ENCODE measurements at regions of chr10 and their contacts with region 1.

Region 1: DNA sequence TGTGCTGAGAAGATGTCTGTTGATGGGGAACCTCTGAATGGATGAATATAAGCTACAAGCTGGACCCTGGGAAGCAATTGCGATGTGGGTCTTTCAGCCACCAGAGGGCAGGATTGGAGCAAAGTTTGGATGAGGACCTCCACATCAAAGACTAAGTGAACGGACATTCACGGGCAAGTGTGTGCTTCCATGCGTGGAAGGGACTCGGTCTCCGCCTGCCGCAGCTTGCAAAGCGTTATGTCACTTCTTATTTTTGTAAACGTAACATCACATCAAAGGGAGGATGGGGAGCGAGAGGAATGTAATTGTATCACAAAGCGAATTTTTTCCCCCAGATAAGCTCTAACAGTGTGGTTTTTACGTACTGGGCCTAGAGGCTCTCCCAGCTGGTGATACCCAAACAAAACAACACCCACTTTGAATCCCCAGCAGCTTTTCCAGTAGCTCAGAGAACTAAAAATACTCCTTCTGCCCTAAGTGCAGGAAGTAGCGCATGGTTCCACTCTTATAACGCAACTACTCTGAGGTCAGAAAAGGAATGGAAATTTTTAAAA is 65.0 kb downstream of the VWA2 start:
- DNase-seq: peak; percentile 67
- ATAC-seq: peak; percentile 92
- H3K4me3 ChIP-seq: peak overlapping the region; percentile 78
- H3K27ac ChIP-seq: no peak overlapping the region
- H3K4me1 ChIP-seq: peaks cover 8% of the 10 kb centered on the region
- H3K27me3 ChIP-seq: no peaks in the 10 kb centered on the region
- CTCF ChIP-seq: peak; percentile 77 to 91 (median 87); a peak in 5 of 6 replicates
- EP300 ChIP-seq: no peak
- POLR2A ChIP-seq: no peak
- RAD21 ChIP-seq: peak; percentile 90

Region 2: DNA sequence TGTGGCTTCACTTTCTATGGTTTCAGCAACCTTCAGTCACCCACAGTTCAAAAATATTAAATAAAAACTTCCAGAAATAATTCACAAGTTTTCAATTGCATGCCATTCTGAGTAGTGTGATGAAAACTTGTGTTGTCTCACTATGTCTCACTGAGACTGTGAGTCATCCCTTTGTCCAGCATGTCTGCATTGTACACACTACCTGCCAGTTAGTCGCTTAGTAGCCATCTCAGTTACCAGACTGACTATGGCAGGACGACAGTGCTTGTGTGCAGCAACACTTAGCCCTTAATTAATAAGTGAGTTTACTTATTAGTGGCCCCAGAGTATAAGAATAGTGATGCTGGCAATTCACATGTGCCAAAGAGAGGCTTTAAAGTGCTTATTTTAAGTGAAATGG is 152.6 kb before region 1 on chr10:
- CTCF ChIA-PET with region 1: no interaction called
- POLR2A ChIA-PET with region 1: no interaction called
- RAD21 ChIA-PET with region 1: no interaction called
- SMC1A ChIA-PET with region 1: no interaction called
- in situ Hi-C with region 1: no loop called
- intact Hi-C with region 1: no loop called
- DNase-seq: no peak
- ATAC-seq: 0 out of 3 replicates have a peak, but pooled peaks have one; percentile 27
- H3K4me3 ChIP-seq: no peak overlapping the region
- H3K27ac ChIP-seq: no peak overlapping the region
- H3K4me1 ChIP-seq: no peaks in the 10 kb centered on the region
- H3K27me3 ChIP-seq: no peaks in the 10 kb centered on the region
- CTCF ChIP-seq: no peak
- EP300 ChIP-seq: no peak
- POLR2A ChIP-seq: no peak
- RAD21 ChIP-seq: no peak

Region 3: DNA sequence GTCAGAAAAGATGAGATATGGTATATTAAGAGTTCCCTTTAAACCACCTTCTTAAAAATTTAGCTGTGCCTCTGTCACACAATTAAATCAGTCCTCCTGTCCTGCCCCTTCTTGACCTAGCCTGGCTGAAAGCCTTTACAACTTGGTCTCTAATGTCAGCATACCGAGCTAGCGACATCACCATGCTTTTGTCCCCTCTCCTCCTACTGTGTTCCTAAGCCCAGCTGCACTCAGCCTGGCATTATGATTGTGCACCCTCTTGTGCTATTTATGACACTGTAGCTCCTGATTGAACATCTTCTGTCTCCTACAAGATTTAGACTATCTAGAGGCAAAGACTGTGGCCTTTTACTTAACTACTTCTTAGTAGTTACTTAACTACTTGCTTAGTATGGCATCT is 95.7 kb before region 1 on chr10:
- CTCF ChIA-PET with region 1: no interaction called
- POLR2A ChIA-PET with region 1: no interaction called
- RAD21 ChIA-PET with region 1: no interaction called
- SMC1A ChIA-PET with region 1: no interaction called
- in situ Hi-C with region 1: loop called (anchors 25 kb)
- intact Hi-C with region 1: no loop called
- DNase-seq: no peak
- ATAC-seq: no peak
- H3K4me3 ChIP-seq: no peak overlapping the region
- H3K27ac ChIP-seq: no peak overlapping the region
- H3K4me1 ChIP-seq: no peaks in the 10 kb centered on the region; the same call in 1 of the 2 replicates
- H3K27me3 ChIP-seq: peaks cover 0 to 5% of the 10 kb centered on the region in 2 experiments; a peak in 3 of 4 replicates
- CTCF ChIP-seq: no peak
- EP300 ChIP-seq: no peak
- POLR2A ChIP-seq: no peak
- RAD21 ChIP-seq: no peak

Region 4: GRCh38 chr10:114334301-114334700 is 30.2 kb after region 1 on chr10:
- CTCF ChIA-PET with region 1: interaction called, 16 read pairs
- POLR2A ChIA-PET with region 1: no interaction called
- RAD21 ChIA-PET with region 1: interaction called, 3 read pairs
- SMC1A ChIA-PET with region 1: interaction called, 3 read pairs
- in situ Hi-C with region 1: no loop called
- intact Hi-C with region 1: no loop called
- DNase-seq: no peak
- ATAC-seq: no peak
- H3K4me3 ChIP-seq: no peak overlapping the region
- H3K27ac ChIP-seq: no peak overlapping the region
- H3K4me1 ChIP-seq: peaks cover 4% of the 10 kb centered on the region; the same call in 1 of the 2 replicates
- H3K27me3 ChIP-seq: peaks cover 0 to 2% of the 10 kb centered on the region in 2 experiments; a peak in 2 of 4 replicates
- CTCF ChIP-seq: no peak
- EP300 ChIP-seq: no peak
- POLR2A ChIP-seq: no peak
- RAD21 ChIP-seq: no peak

Region 5: DNA sequence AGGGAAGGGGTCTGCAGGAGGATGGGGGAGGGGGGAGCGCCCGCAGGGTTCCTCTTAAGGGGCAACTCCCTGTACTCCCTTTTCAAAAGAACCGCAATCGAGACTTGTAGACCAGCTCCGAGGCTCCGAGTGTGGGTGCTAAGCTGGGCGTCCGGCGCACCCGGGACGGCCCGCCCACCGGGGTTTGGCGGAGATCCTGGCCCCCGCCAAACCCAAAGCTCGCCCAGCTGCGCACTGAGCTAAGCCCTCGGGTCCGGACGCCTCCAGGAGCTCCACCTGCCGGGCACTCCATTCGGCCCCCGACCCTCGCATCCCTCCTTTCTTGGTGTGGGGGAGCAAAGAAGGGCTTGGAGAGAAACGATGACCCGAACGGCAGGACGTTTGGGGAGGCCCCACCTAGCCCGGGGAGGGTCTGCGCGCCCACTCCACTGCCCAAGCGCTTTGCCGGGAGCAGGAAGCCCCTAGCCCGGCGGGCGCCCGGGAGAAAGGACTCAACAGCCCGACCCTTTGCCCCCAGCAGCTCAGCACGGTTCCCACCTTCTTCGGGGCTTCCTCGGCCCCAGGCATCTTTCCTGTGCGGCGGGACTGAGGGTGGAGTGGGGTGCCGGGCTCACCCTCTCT is 99.6 kb after region 1 on chr10:
- CTCF ChIA-PET with region 1: interaction called, 25 read pairs
- POLR2A ChIA-PET with region 1: no interaction called
- RAD21 ChIA-PET with region 1: interaction called, 21 read pairs
- SMC1A ChIA-PET with region 1: interaction called, 14 read pairs
- in situ Hi-C with region 1: no loop called
- intact Hi-C with region 1: no loop called
- DNase-seq: no peak
- ATAC-seq: peak; percentile 50
- H3K4me3 ChIP-seq: peak overlapping the region; percentile 40; the same call in 1 of the 2 replicates
- H3K27ac ChIP-seq: peak overlapping the region; percentile 8; the same call in 1 of the 2 replicates
- H3K4me1 ChIP-seq: peaks cover 8% of the 10 kb centered on the region
- H3K27me3 ChIP-seq: peaks cover 5 to 7% of the 10 kb centered on the region in 2 experiments; a peak in 3 of 4 replicates
- CTCF ChIP-seq: no peak; a peak in 1 of 6 replicates
- EP300 ChIP-seq: no peak
- POLR2A ChIP-seq: no peak
- RAD21 ChIP-seq: peak; percentile 23; the same call in 1 of the 2 replicates

Region 6: DNA sequence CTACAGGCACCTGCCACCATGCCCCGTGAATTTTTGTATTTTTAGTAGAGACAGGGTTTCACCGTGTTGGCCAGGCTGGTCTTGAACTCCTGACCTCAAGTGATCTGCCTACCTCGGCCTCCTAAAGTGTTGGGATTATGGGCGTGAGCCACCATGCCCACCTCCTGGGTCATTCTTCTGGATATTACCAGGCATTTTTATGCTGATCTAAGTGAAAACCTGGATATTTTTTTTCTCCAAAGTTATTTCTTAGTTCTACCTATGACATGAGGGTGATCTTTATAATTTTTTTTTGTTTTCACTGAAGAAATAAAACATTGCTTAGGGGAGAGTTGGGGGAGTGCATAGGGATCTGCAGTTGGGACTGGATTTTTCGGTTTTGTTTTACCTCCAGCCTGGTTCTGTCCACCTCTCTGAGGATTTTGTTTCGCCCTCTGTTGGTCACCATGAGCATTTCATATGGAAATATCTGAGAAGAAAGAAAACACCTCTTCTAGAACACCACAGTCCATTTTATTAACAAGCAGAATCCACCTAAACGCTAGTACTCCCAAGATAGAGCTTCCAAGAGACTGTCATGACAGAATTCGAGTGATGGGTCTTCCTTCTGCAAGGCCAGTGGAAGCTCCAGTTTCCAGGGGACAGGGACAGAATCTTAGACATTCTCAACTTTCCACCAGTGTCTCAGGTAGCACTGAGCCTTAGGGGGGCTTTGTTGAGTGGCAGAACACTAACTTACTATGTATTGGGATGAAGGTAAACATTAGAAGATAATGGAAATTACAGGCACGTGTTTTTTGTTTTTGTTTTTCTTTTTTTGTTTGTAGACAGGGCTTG is 133.6 kb after region 1 on chr10:
- CTCF ChIA-PET with region 1: interaction called, 58 read pairs
- POLR2A ChIA-PET with region 1: no interaction called
- RAD21 ChIA-PET with region 1: interaction called, 18 read pairs
- SMC1A ChIA-PET with region 1: interaction called, 10 read pairs
- in situ Hi-C with region 1: no loop called
- intact Hi-C with region 1: loop called (anchors 1 kb)
- DNase-seq: no peak
- ATAC-seq: peak; percentile 56
- H3K4me3 ChIP-seq: no peak overlapping the region
- H3K27ac ChIP-seq: no peak overlapping the region
- H3K4me1 ChIP-seq: no peaks in the 10 kb centered on the region
- H3K27me3 ChIP-seq: no peaks in the 10 kb centered on the region; a peak in 1 of 4 replicates
- CTCF ChIP-seq: peak; percentile 41 to 51 (median 44)
- EP300 ChIP-seq: no peak
- POLR2A ChIP-seq: no peak
- RAD21 ChIP-seq: peak; percentile 49; the same call in 1 of the 2 replicates

Region 7: GRCh38 chr10:114470956-114471905 is 167.1 kb after region 1 on chr10:
- CTCF ChIA-PET with region 1: interaction called, 25 read pairs
- POLR2A ChIA-PET with region 1: no interaction called
- RAD21 ChIA-PET with region 1: interaction called, 13 read pairs
- SMC1A ChIA-PET with region 1: interaction called, 18 read pairs
- in situ Hi-C with region 1: no loop called
- intact Hi-C with region 1: no loop called
- DNase-seq: peak; percentile 24
- ATAC-seq: peak; percentile 99
- H3K4me3 ChIP-seq: no peak overlapping the region
- H3K27ac ChIP-seq: no peak overlapping the region
- H3K4me1 ChIP-seq: 0 out of 2 replicates have a peak, but pooled peaks cover 3% of the 10 kb centered on the region
- H3K27me3 ChIP-seq: no peaks in the 10 kb centered on the region
- CTCF ChIP-seq: peak; percentile 83 to 86 (median 85)
- EP300 ChIP-seq: no peak
- POLR2A ChIP-seq: no peak
- RAD21 ChIP-seq: peak; percentile 89

Region 8: GRCh38 chr10:114779803-114780609 is 475.9 kb after region 1 on chr10:
- CTCF ChIA-PET with region 1: interaction called, 17 read pairs
- POLR2A ChIA-PET with region 1: no interaction called
- RAD21 ChIA-PET with region 1: no interaction called
- SMC1A ChIA-PET with region 1: interaction called, 12 read pairs
- in situ Hi-C with region 1: loop called (anchors 25 kb)
- intact Hi-C with region 1: no loop called
- DNase-seq: no peak
- ATAC-seq: peak; percentile 53
- H3K4me3 ChIP-seq: no peak overlapping the region
- H3K27ac ChIP-seq: no peak overlapping the region
- H3K4me1 ChIP-seq: no peaks in the 10 kb centered on the region
- H3K27me3 ChIP-seq: peaks cover 0 to 2% of the 10 kb centered on the region in 2 experiments; a peak in 1 of 4 replicates
- CTCF ChIP-seq: no peak
- EP300 ChIP-seq: no peak
- POLR2A ChIP-seq: no peak
- RAD21 ChIP-seq: no peak

Region 9: DNA sequence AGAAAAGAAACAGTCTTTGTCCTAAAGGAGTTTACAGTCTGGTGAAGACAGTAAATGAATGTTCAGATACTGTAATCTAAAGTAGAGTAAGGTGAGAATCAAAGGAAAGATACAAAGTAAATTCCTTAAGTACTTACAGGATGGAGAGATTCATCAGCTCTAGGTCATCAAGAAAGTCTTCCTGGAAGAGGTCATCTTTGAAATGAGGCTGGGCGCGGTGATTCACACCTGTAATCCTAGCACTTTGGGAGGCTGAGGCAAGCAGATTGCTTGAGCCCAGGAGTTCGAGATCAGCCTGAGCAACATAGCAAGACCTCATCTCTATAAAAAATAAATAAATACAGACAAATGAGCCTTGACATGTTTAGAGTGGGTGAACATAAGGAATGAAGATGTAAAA is 535.8 kb after region 1 on chr10:
- CTCF ChIA-PET with region 1: no interaction called
- POLR2A ChIA-PET with region 1: no interaction called
- RAD21 ChIA-PET with region 1: no interaction called
- SMC1A ChIA-PET with region 1: no interaction called
- in situ Hi-C with region 1: no loop called
- intact Hi-C with region 1: no loop called
- DNase-seq: no peak
- ATAC-seq: no peak
- H3K4me3 ChIP-seq: no peak overlapping the region
- H3K27ac ChIP-seq: no peak overlapping the region
- H3K4me1 ChIP-seq: no peaks in the 10 kb centered on the region
- H3K27me3 ChIP-seq: no peaks in the 10 kb centered on the region
- CTCF ChIP-seq: no peak
- EP300 ChIP-seq: no peak
- POLR2A ChIP-seq: no peak
- RAD21 ChIP-seq: no peak

Measured in GM12878 (cell line).